Activated T-helper 1 cell treated with anti-CD3 and anti-CD28 coated beads, Interleukin-12 subunit alpha, Interleukin-12 subunit beta, Interleukin-2, Interleukin-4 antibody, amounts not matched to agents 30 ng/mL and 10 ng/mL and 1 ng/mL, durations not matched to agents 14 hours and 24 hours and 36 hours (primary cell): ENCODE measurements at regions of chr1 and their contacts with region 1.

Region 1: DNA sequence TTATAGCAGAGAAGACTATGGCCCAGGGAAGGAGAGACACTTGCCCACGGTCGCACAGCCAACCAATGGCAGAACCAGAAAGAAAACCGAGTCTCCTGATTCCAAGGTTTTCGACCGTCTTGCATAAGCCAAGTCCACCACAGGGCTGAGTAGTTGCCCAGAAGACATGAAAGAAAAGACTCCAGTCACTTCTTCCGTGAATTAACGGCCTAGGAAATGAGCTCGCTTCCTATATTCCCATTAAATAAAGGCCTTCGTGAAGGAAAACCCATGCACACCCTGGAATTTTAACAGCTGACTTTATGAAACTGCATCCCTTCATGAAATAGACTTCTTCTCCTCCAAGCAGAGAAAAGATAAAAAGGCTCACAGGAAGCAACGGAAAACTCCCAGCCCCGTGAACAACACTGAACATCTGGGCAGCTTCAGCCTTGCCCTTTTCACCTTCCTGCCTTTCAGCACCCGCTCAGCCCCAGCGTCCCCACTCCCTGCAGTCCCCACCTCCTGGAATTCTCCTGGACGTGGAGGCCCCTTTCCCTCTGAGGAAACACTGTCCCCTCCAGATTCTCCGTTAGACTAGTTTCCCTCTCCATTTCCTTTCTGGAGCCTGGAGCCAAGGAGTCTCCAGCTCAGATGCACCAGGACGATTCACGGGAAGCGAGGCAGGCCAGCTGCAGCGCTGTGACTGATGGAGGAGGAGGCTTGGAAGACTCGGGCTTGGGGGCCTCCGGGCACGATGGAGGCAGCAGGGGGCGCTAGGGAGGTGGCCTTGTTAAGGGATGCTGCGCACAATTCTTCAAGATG is 2.7 kb upstream of the MYOC start:
- DNase-seq: peak; percentile 54
- H3K4me3 Mint-ChIP-seq: peak overlapping the region; percentile 60
- H3K27ac Mint-ChIP-seq: no peak overlapping the region
- H3K4me1 Mint-ChIP-seq: peaks cover 13% of the 10 kb centered on the region
- H3K27me3 Mint-ChIP-seq: peaks cover 25% of the 10 kb centered on the region

Region 2: GRCh38 chr1:171715813-171716251 is 60.7 kb after region 1 on chr1:
- intact Hi-C with region 1: loop called (anchors 5 kb)
- DNase-seq: no peak
- H3K4me3 Mint-ChIP-seq: no peak overlapping the region
- H3K27ac Mint-ChIP-seq: no peak overlapping the region
- H3K4me1 Mint-ChIP-seq: peaks cover 8% of the 10 kb centered on the region
- H3K27me3 Mint-ChIP-seq: no peaks in the 10 kb centered on the region

Region 3: DNA sequence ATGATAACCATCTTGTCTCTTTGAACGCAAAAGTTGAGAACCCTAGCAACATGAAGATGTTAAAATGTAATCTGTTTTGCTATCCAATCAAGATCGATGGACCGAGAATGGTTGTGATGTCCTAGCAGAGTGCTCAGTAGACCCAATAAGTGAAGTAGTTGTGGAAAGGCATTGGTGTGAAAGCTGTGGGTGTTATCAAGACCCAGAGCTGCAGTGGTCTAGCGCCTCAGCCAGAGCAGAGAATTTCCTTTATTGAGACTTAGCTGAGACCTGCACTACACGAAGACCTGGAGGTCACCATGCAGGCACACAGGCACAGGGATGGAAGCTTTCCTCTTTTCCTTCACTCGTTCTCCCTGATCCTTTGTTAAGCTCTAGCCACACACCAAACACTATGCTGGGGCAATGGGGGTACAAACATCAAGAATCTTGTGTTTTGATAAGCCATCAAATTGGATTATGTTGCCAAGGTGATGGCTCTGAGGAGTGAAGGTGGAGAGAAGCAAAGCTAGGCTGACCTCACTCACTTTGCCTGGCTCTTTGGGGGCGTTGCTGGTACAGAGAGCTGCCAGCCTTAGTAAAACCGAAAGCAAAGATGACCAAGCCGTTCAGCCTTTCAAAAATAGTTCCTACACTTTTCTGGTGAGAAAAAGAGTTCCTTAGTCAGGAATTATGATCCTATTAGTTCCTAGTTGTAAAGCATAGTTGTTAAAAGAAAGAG is 150.4 kb after region 1 on chr1:
- intact Hi-C with region 1: no loop called
- DNase-seq: no peak
- H3K4me3 Mint-ChIP-seq: no peak overlapping the region
- H3K27ac Mint-ChIP-seq: no peak overlapping the region
- H3K4me1 Mint-ChIP-seq: peaks cover 21% of the 10 kb centered on the region
- H3K27me3 Mint-ChIP-seq: no peaks in the 10 kb centered on the region